Prostate gland (tissue), 2 donors: ENCODE measurements at regions of chr18 and their contacts with region 1.

Region 1: DNA sequence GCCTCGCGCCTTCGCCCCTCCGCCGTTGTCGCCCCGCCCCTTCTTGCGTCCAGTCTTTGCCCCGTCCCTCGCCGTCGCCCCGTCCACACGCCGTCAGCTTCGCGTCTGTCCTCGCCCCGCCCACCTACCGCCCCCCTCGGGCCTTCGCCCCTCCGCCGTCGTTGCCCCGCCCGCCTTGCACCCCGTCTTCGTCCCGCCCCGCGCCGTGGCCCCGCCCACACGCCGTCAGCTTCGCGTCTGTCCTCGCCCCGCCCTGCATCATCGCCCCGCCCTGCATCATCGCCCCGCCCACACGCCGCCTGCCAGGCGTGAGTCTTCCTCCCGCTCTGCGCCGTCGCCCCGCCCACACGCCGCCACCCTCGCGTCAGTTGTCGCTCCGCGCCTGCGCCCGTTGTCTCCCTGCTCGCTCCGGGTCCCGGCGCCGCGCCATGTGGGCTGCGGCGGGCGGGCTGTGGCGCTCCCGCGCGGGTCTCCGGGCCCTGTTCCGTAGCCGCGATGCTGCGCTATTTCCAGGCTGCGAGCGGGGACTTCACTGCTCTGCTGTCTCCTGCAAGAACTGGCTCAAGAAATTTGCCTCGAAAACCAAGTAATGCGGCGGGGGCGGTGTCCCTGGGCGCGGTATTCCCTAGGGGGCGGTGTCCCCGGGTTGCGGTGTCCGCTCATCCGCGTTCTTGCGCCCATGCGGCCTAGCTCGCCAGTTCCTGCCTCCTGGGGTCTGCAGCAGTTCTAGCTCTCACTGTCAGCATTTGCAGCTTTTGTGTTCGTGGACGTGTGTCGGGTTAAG is at the start of gene RBFA:
- DNase-seq: peak; percentile 100
- H3K4me3 ChIP-seq: peak within 1 kb of the TSS; percentile 58 to 69
- H3K27ac ChIP-seq: peak within 1 kb of the TSS; percentile 79 to 87
- H3K4me1 ChIP-seq: no peaks in the 10 kb centered on the region
- H3K27me3 ChIP-seq: no peaks in the 10 kb centered on the region
- CTCF ChIP-seq: peak in 3 of 4 experiments; percentile 51 to 73 (median 64)
- POLR2A ChIP-seq: peak; percentile 72
- total RNA-seq, gene RBFA: 31.6 to 38.5 TPM

Region 2: GRCh38 chr18:79679111-79679872 is 355.0 kb before region 1 on chr18 and contains the start of gene CTDP1:
- intact Hi-C with region 1: loop called (anchors 5 kb)
- DNase-seq: peak; percentile 99
- H3K4me3 ChIP-seq: peak within 1 kb of the TSS; percentile 69 to 88
- H3K27ac ChIP-seq: peak within 1 kb of the TSS; percentile 98 to 99
- H3K4me1 ChIP-seq: peaks cover 11% of the 10 kb centered on the region
- H3K27me3 ChIP-seq: no peaks in the 10 kb centered on the region
- CTCF ChIP-seq: peak in 2 of 4 experiments; percentile 11 to 16
- POLR2A ChIP-seq: peak; percentile 85
- total RNA-seq, gene CTDP1: 23.0 to 33.6 TPM

Region 3: DNA sequence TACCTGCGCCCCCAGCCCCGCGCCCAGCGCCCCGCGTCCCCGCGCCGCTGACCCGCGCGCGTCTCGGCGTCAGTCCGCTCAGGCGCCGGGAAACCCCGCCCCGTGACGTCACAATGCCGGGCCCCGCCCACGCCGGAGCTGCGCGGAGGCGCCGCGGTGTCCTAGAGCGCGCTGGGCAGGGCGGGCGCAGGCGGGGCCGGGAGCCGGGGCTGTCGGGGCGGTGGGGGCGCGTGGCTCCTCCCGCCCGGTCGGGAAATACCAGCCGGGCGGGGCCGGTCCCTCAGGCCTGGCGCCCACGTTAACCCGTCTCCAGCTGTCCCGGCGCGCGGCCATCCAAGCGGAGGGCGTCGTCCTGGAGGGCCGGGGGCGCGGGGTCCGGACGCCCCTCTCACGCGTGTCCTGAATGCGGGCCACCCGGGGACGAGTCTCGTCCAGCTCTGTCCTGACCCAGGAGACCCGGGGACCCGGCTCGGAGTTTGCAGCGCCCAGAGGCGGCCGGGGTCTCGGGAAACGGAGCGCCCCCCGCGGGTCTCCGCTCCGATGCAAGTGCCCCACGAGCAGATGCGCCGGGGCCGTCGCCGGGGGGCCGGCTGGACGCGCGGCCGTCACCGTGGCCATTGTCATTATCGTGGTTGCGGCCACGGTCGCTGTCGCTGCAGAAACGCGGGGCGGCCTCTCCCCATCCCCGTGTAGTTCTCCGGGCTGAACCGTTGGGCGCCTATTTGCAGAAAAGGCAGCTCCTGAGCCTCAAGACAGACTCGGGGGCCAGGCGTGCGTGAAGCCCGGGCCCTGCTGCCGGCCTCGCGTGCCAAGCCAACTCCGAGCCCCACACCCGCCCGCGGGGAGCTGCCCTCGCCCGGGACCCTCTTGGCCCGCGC is 82.4 kb before region 1 on chr18 and contains the start of gene SLC66A2:
- intact Hi-C with region 1: loop called (anchors 5 kb)
- DNase-seq: peak; percentile 88
- H3K4me3 ChIP-seq: peak within 1 kb of the TSS; percentile 90 to 97
- H3K27ac ChIP-seq: peak within 1 kb of the TSS; percentile 74 to 80
- H3K4me1 ChIP-seq: peaks cover 10% of the 10 kb centered on the region
- H3K27me3 ChIP-seq: no peaks in the 10 kb centered on the region
- CTCF ChIP-seq: no peak
- POLR2A ChIP-seq: peak; percentile 81
- total RNA-seq, gene SLC66A2: 37.6 to 74.1 TPM

Region 4: GRCh38 chr18:79988451-79989194 is 45.6 kb before region 1 on chr18 and contains the start of gene TXNL4A:
- intact Hi-C with region 1: loop called (anchors 5 kb)
- DNase-seq: peak; percentile 75
- H3K4me3 ChIP-seq: peak within 1 kb of the TSS; percentile 80 to 90
- H3K27ac ChIP-seq: peak within 1 kb of the TSS; percentile 91 to 96
- H3K4me1 ChIP-seq: no peaks in the 10 kb centered on the region
- H3K27me3 ChIP-seq: no peaks in the 10 kb centered on the region
- CTCF ChIP-seq: peak in 2 of 4 experiments; percentile 4 to 15
- POLR2A ChIP-seq: peak; percentile 66
- total RNA-seq, gene TXNL4A: 25.4 to 35.2 TPM

Region 5: GRCh38 chr18:80108728-80109675 is 74.7 kb after region 1 on chr18 and contains the start of gene ADNP2:
- intact Hi-C with region 1: loop called (anchors 5 kb)
- DNase-seq: peak; percentile 59
- H3K4me3 ChIP-seq: peak within 1 kb of the TSS; percentile 69 to 73
- H3K27ac ChIP-seq: peak within 1 kb of the TSS; percentile 76 to 81
- H3K4me1 ChIP-seq: peaks cover 5% of the 10 kb centered on the region
- H3K27me3 ChIP-seq: no peaks in the 10 kb centered on the region
- CTCF ChIP-seq: no peak
- POLR2A ChIP-seq: peak; percentile 34
- total RNA-seq, gene ADNP2: 17.5 to 36.0 TPM

Region 6: GRCh38 chr18:80147418-80148325 is 113.4 kb after region 1 on chr18:
- intact Hi-C with region 1: loop called (anchors 5 kb)
- DNase-seq: peak; percentile 93
- H3K4me3 ChIP-seq: peak overlapping the region; percentile 48 to 53
- H3K27ac ChIP-seq: peak overlapping the region; percentile 70 to 71
- H3K4me1 ChIP-seq: no peaks in the 10 kb centered on the region
- H3K27me3 ChIP-seq: no peaks in the 10 kb centered on the region
- CTCF ChIP-seq: no peak
- POLR2A ChIP-seq: peak; percentile 24